Right ventricle myocardium inferior (tissue), 1 donor: ENCODE measurements at regions of chr11 and their contacts with region 1.

Region 1: GRCh38 chr11:19712281-19713220 is at the start of gene NAV2:
- DNase-seq: peak; percentile 94
- ATAC-seq: peak; percentile 98
- total RNA-seq, gene NAV2: 14.0 TPM

Region 2: DNA sequence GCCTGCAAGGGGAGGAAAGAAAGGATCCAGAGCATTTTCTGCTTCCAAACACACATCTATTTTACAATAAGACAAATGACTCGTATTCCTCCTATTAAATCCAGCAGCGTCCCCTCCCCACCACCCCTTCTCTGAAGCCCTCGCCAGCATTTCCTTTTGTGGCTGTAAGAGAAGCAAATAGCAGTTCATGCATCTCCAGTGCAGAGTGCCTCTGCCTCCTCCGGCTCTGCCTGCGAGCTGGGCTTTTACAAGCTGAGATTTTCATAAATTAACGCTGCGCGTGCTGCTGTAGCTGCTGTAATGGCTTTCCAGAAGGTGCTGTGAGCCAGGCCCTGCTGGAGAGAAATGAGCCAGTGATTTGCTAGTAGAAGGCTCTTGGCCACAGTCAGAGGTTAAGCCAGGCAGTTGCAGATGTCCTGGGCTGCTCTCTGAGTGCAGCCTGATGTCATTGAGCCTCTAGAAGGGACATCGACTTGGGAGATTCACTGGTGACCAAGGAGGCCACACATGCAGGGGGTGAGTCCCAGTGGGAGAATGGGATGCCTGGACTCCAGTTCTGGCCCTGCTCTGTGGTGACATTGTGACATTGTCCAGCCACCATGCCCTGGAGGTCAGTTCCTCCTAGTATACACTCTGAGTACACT is 134.5 kb before region 1 on chr11:
- intact Hi-C with region 1: loop called (anchors 1 kb)
- DNase-seq: no peak
- ATAC-seq: peak; percentile 81

Region 3: GRCh38 chr11:19628018-19628417 is 84.5 kb before region 1 on chr11:
- intact Hi-C with region 1: loop called (anchors 5 kb)
- DNase-seq: peak; percentile 86
- ATAC-seq: peak; percentile 93

Region 4: DNA sequence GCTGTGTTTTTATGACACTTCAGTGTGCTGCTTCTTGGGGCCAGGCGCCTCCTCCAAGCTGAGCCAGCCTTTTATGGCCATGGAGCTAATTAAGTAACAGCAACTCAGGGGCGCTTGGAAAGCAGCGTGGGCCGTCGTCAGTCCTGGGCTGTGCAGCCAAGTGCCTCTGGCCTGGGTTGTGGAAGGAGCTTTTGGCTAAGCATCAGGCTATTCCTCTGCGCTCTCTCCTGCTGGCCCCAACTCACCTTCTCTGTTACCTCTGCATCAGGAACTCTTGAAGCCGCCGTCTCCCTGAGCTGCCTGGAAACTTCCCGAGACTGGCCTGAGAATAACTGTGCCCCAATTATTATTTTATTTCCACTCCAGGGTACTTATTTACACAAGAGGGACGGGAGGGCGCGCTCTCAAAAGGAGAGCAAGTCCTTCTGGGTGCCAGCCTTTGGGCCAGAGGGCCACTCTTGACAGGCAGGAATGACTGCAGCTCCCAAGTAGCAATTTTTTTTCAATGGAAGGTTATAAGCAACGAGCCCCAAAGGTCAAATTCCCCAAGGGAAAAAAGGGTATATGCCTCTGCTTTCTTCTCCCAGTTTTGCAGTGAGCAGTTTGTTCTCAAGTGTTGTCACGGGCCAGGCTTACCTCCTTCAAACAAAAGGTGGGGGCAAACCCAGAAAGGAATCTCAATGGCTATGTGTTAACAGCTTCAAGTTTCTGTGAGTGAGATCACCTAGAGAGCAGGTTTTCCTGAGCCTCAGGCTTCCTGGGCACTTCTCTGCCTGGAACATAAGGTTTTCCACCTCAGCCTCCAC is 38.4 kb before region 1 on chr11:
- intact Hi-C with region 1: loop called (anchors 2 kb)
- DNase-seq: peak; percentile 90
- ATAC-seq: peak; percentile 94

Region 5: GRCh38 chr11:19698493-19699292 is 13.9 kb before region 1 on chr11:
- intact Hi-C with region 1: loop called (anchors 2 kb)
- DNase-seq: no peak
- ATAC-seq: peak; percentile 91

Region 6: DNA sequence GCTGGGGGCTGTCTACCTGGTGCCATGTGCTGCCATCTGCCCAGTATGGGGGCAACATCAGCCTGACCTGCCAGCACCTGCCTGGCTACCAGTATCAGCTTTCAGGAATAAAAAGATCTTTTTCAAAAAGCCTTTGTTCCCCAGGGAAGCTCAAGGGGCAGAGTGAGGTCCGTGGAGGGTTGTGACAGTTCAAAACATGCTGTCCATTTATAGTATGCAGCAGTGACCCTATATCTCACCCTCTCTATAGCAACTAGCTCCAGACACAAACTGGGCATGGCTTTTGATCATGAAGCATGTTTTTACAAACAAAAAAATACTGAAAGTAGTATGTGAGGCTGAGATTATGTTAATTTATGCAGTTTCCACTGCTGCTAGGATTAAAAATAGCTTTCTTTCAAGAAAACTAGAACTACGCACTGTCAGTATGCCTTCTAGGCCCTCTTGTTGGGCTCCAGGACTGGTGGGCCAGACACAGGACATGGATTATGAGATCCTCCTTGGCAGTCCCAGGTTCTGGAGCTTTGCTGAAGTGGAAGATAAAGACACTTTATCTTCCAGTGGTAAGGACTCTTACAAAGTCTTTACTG is 23.5 kb after region 1 on chr11:
- intact Hi-C with region 1: loop called (anchors 2 kb)
- DNase-seq: no peak
- ATAC-seq: no peak